Common myeloid progenitor, CD34-positive (primary cell): ENCODE measurements at regions of chr17 and their contacts with region 1.

Region 1: GRCh38 chr17:4973256-4974114 is 5.9 kb upstream of the SPAG7 start:
- DNase-seq: no peak
- H3K4me3 ChIP-seq: no peak overlapping the region
- H3K27ac ChIP-seq: no peak overlapping the region
- H3K4me1 ChIP-seq: peaks cover 3 to 33% (median 12%) of the 10 kb centered on the region in 4 experiments
- H3K27me3 ChIP-seq: no peaks in the 10 kb centered on the region

Region 2: DNA sequence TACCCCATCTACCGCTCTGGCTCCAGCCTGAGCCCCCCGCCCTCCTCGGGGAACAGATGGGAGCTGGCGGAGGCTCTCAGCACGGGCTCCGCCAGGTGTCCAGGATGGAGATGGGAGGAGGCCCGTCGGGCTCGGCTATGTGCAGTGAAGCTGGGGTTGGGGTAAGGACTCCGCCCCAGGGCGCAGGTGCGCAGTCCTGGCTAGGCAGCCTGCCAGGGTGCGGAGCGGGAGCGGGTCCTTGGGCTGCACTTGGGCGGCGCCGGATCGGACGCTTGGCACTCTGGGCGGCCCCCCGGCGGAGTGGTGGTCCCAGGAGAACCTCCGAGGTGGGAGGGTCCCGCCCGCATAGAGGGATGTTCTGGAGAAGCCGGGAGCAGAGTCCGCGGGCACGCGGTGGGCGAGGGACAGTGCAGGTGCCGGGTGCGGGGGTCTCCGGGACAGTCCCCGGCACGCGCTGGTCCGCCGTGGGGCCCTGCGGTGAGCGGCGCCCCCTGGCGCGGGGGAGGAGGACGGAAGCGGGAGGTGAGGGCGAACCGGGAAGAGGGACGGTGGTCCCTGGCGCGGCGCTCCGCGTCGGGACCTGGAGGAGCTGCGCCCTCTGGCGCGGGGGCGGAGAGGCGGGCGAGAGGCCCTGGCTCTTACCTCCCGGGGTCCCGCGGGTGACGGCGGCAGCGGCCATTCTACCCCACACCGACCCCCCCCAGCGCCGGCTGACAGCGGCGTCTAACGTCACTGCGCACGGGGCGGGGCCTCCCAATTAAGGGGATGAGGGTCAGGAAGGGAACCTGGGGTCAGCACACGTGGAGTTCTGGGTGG is 13.7 kb after region 1 on chr17 and contains the start of gene CAMTA2:
- CTCF ChIA-PET with region 1: interaction called, 35 read pairs
- POLR2A ChIA-PET with region 1: interaction called, 4 read pairs
- DNase-seq: peak; percentile 80 to 85 (median 81)
- H3K4me3 ChIP-seq: peak within 1 kb of the TSS; percentile 74 to 94 (median 80)
- H3K27ac ChIP-seq: peak within 1 kb of the TSS; percentile 58 to 79
- H3K4me1 ChIP-seq: peaks cover 8 to 26% (median 24%) of the 10 kb centered on the region in 4 experiments
- H3K27me3 ChIP-seq: no peaks in the 10 kb centered on the region